ENCODE measurements at regions of chr9 and their contacts with region 1.

Region 1: DNA sequence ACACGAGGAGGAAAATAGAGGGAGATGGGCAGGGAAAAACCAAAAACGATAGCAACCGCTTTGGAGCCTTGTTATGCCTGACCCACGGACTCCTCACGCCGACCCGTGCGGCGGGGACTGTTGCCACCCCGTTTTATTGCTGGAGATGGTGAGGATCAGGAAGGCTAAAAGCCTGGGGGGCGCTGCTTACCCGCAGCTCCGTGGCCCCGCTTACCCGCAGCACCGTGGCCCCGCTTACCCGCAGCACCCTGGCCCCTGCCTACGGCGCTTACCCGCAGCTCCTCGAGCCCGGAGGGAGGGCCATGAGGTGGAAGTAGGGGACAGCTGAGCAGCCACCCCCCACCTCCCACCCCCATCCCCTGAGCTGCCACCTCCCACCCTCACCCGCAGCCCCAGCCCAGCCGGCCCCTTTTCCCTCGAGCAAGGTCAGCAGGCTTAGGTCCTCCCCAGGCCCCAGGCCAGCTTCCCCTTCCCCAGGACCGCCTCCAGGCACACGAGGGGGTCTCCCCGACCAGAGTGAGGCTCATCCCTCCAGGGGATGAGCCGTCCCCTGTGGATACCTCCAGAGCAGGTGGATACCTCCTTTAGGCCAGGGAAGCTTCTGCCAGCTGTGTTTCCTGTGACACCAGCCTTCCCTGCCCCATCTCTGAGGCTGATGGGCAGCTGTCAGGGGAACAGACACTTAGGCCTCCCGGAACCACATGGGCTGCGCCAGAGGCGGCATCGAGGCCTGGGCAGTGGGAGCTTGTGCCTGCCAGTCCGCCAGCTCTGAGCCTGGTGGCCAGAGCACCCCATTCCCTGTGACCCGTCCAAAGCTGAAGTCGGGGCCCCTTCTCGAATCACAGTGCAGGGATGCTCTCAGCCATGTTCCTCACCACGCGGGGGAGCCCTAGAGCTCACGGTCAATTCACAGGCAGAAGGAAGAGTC is 92.3 kb downstream of the LMX1B start:
- DNase-seq: peak in 1 of 2 experiments; percentile 71
- H3K4me3 ChIP-seq: no peak overlapping the region
- H3K27ac ChIP-seq: no peak overlapping the region
- H3K4me1 ChIP-seq: peaks cover 17% of the 10 kb centered on the region
- H3K27me3 ChIP-seq: peaks cover 18% of the 10 kb centered on the region; the same call in 1 of the 2 replicates
- CTCF ChIP-seq: peak; percentile 84

Region 2: DNA sequence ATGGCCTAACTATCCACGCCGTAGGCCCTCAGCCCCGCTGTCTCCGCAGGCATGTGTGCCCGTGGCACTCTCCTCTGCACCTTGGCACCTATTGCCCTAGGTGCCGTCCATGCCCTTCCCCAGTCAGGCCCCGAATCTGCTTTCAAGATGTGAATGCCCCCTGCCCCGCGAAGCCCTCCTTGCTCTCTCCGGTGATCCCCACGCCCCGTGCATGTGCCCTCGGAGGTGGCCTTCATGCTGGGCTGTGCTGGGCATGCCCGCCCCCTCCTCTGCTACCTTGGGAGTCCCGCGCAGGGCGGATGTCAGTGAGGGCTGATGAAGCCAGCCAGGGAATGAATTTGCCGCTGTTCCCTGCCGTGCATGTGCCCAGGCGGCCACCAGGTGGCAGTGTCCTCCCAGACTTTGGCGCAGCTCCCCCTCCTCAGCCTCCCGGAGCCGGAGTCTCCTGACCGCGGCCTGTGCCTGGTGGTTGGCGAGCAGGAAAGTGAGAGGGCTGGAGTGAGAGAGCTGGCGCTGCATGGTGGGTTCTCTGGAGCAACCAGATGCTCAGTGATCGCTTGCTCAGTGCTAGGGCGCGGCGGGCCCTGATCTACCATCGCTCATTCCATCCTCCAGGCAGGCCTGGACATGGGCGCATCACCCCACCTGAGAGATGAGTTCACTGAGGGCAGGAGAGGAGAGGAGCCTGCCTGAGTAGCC is 205.2 kb before region 1 on chr9:
- CTCF ChIA-PET with region 1: interaction called, 3 read pairs
- POLR2A ChIA-PET with region 1: no interaction called
- intact Hi-C with region 1: loop called (anchors 2 kb)
- DNase-seq: peak; percentile 42 to 79
- H3K4me3 ChIP-seq: no peak overlapping the region
- H3K27ac ChIP-seq: no peak overlapping the region
- H3K4me1 ChIP-seq: no peaks in the 10 kb centered on the region
- H3K27me3 ChIP-seq: peaks cover 5% of the 10 kb centered on the region; the same call in 1 of the 2 replicates
- CTCF ChIP-seq: peak; percentile 93

Region 3: DNA sequence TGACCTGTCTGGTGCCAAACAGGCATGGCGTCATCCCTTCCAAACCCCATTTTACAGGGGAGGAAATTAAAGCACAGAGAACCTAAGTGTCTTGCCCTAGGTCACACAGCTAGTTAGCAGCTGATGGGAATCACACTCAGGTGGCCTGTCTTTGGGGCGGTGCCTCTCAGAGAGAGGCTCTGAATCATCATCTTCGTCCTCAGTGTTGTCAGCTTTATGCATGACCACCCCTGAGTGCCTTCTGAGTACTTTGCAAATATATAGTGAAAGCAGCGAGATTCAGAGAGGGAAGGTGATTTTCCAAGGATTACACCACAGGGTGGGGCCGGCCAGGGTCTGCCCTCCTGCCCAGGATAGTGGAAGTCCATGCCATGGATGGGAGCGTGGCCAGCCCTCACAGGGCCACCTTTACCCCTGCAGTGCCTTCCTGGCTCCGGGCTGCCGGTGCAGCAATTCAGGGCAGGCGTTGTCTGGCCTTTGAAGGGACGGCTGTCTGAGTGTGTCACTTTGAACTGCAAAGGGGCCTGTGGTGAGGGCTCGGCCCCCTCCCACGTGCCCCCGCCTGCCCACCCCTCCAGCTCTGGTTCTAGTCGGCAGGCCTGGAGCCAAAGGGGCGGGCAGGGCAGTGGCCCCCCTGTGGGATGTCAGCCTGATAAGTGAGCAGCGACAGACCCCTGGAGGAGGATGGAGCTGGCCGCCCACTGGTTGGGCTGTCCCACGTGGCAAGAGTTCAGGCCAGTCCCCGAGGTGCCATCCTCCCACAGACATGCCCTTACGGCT is 75.4 kb before region 1 on chr9:
- CTCF ChIA-PET with region 1: interaction called, 11 read pairs
- POLR2A ChIA-PET with region 1: no interaction called
- intact Hi-C with region 1: no loop called
- DNase-seq: no peak
- H3K4me3 ChIP-seq: no peak overlapping the region
- H3K27ac ChIP-seq: no peak overlapping the region
- H3K4me1 ChIP-seq: no peaks in the 10 kb centered on the region
- H3K27me3 ChIP-seq: peaks cover 47% of the 10 kb centered on the region; the same call in 1 of the 2 replicates
- CTCF ChIP-seq: no peak

Measured in PC-9 (cell line).